ENCODE measurements at regions of chr6 and their contacts with region 1.

Region 1: DNA sequence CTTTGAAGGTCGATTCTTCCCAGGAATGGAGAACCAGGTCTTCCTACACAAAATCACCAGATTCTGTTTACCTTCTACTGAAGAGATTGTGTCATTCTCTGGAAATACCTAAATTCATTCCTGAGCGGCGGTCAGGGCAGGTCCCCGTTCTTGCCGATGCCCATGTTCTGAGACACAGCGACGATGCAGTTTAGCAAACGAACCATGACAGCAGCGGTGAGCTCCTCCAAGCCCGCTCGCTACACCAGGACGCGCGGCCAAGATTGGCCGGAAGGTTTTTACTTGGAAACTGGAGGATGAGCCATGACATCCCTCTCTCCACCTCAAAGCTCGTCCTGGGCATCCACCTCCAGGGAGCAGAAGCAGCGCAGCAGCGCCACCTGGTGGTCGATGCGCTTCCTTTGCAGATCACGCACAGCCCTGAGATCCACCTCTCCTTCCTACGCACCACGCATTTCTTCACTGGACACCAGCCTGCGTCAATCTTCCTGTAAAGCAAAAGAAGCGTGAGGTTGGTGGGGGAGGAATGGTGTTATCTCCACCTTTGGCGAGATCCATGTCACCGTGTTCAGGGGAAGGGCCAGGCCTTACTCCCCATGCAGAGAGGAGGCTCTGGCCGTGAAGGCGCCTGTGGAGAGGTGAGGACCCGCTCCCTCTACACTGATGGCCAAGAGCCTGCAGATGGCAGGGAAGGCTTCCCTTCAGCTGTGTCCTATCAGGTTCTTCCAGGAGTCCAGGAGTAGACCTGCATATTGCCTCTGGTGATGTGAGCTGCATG is 9.9 kb upstream of the HLA-B start:
- DNase-seq: peak; percentile 81
- H3K4me3 Mint-ChIP-seq: peak overlapping the region; percentile 56
- H3K27ac Mint-ChIP-seq: no peak overlapping the region
- H3K4me1 Mint-ChIP-seq: peaks cover 39% of the 10 kb centered on the region
- H3K27me3 Mint-ChIP-seq: peaks cover 64% of the 10 kb centered on the region

Region 2: GRCh38 chr6:31139599-31139998 is 227.3 kb before region 1 on chr6:
- intact Hi-C with region 1: loop called (anchors 1 kb)
- DNase-seq: no peak
- H3K4me3 Mint-ChIP-seq: no peak overlapping the region
- H3K27ac Mint-ChIP-seq: no peak overlapping the region
- H3K4me1 Mint-ChIP-seq: peaks cover 8% of the 10 kb centered on the region
- H3K27me3 Mint-ChIP-seq: peaks cover 3% of the 10 kb centered on the region

Region 3: DNA sequence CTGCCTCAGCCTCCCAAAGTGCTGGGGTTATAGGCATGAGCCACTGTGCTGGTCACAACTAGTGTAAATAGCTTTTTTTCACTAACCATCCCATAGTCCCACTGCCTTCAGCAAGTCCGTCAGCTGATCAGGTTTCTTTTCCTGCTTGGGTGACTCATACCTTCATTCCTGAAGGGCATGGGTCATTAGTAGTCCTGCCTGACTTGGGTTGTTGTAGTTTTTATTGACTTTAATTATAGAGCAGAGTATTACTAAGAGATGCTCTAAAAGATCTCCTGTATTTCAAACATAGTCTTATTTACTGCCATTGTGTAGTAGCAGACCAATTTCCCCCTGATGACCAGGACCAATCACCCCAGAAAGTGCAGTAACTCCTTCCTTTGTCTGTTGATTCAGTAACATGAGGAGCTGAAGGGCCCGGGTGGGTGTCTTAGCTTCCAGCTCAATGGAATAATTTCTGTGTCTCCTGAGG is 120.8 kb before region 1 on chr6:
- intact Hi-C with region 1: no loop called
- DNase-seq: no peak
- H3K4me3 Mint-ChIP-seq: no peak overlapping the region
- H3K27ac Mint-ChIP-seq: no peak overlapping the region
- H3K4me1 Mint-ChIP-seq: peaks cover 5% of the 10 kb centered on the region
- H3K27me3 Mint-ChIP-seq: peaks cover 15% of the 10 kb centered on the region

Measured in activated T-helper 1 cell treated with anti-CD3 and anti-CD28 coated beads, Interleukin-12 subunit alpha, Interleukin-12 subunit beta, Interleukin-2, Interleukin-4 antibody, amounts not matched to agents 30 ng/mL and 10 ng/mL and 1 ng/mL, durations not matched to agents 14 hours and 24 hours and 36 hours (primary cell).